ENCODE measurements at regions of chr10 and their contacts with region 1.

Region 1: GRCh38 chr10:6108603-6109443 is 20.0 kb downstream of the RBM17 start:
- DNase-seq: no peak
- H3K4me3 ChIP-seq: no peak overlapping the region
- H3K27ac ChIP-seq: no peak overlapping the region
- H3K4me1 ChIP-seq: peaks cover 0 to 3% (median 0%) of the 10 kb centered on the region in 4 donors
- H3K27me3 ChIP-seq: no peaks in the 10 kb centered on the region
- CTCF ChIP-seq: peak; percentile 77 to 82

Region 2: DNA sequence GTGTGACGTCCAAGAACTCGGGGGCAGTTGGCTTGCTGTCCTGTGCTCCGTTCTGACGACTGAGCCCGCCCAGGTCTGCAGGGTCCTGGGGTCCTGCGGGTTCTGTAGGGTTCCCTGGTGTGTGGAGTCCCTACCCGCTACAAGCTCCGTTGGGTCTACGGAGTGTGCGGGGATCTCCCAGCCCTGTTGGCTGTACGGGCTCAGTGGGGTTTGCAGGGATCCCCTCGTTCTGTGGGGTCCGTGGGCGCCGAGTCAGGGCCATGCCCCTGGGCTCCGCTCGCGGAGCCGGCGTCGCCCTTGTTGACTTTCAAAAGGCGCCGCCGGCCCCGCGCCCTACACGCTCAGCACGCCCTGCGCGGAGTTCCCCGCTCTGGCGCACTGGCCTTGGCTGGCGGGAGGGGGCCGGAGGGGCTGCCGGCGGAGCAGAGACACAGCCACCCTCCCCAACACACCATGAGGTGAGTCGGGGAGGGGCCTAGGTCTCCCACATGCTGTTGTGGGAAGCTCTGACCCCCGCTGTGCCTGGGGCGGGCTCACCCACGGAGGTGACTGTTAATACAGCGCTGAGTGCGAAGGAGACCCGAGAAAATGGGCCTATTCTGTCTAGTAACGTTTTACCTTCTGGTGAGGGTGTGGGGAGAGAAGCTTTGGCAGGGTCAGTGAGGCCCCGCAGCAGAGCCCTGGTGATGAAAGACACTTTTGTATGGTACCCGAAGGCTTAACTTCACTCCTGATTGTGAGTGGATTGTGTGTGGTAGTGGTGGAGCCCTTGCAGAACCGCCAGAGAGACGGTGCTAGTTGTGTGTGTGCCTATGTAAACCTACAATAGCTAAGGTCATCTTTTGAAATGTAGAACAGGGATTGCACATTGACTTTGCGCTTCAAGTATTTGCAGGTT is 416.1 kb before region 1 on chr10:
- intact Hi-C with region 1: no loop called
- DNase-seq: no peak
- H3K4me3 ChIP-seq: peak overlapping the region; percentile 47 to 56
- H3K27ac ChIP-seq: peak overlapping the region; percentile 34 to 41
- H3K4me1 ChIP-seq: peaks cover 0 to 39% (median 16%) of the 10 kb centered on the region in 4 donors
- H3K27me3 ChIP-seq: no peaks in the 10 kb centered on the region
- CTCF ChIP-seq: no peak

Region 3: DNA sequence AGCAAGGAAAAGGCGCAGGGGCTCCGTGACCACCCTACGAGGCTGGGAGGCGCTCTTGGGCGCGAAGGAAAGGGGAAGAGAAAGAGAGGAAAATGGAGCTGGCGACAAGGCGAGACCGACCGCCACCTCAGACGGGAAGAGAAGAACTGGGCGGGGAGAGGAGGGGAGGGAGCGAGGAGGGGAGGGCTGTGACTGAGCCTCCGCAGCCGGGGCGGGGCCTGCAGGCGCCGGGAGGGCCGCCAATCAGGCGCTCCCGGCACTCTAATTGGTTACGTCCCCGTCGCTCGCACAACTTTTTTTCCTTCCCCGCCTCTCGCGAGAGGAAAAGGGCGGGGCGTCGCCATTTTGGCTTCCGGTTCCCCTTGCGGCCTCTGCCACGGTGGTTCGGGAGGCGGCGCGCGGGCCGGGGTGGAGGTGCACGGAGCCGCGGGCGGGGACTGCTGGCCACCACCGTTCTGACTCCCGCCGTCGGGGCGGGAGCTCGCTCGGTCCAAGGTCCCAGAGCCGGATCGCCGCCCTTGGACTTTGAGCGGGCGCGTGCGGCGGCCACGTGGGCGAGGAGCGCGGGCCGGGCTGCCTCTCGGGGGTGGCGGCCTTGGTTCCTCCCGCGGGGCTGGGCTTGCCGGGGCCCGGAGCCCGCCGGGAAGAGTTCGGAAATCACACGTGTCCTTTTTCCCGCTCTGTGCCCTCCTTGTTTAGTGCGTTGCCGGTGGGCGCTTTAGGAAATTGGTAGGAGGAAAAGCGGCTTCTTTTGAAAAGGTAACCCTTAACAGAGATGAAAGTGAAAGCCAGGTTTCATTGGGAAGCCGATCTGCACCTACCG is 295.3 kb before region 1 on chr10 and contains the start of gene GDI2:
- intact Hi-C with region 1: no loop called
- DNase-seq: peak; percentile 94 to 97
- H3K4me3 ChIP-seq: peak within 1 kb of the TSS; percentile 91 to 100
- H3K27ac ChIP-seq: peak within 1 kb of the TSS; percentile 96 to 99
- H3K4me1 ChIP-seq: peaks cover 0 to 46% (median 14%) of the 10 kb centered on the region in 4 donors
- H3K27me3 ChIP-seq: no peaks in the 10 kb centered on the region
- CTCF ChIP-seq: peak in 1 of 2 experiments; percentile 24

Region 4: DNA sequence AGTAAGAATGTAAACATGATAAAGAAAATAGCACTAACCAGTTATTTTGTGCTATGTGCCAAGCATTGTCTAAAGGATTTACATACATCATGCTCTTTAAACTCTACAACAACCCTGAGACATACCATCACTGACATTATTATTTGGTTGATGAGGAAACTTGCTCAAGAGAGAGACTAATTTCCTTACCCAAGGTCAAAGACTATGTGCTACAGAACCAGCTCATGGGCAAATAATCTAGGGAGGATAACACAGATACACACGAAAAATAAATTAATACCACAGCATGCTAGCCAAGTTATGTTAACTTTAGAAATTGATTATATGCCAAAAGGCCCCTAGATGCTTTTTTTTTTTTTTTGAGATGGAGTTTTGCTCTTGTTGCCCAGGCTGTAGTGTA is 221.8 kb before region 1 on chr10:
- intact Hi-C with region 1: no loop called
- DNase-seq: no peak
- H3K4me3 ChIP-seq: no peak overlapping the region
- H3K27ac ChIP-seq: no peak overlapping the region
- H3K4me1 ChIP-seq: peaks cover 0 to 34% (median 27%) of the 10 kb centered on the region in 4 donors
- H3K27me3 ChIP-seq: no peaks in the 10 kb centered on the region
- CTCF ChIP-seq: no peak

Region 5: DNA sequence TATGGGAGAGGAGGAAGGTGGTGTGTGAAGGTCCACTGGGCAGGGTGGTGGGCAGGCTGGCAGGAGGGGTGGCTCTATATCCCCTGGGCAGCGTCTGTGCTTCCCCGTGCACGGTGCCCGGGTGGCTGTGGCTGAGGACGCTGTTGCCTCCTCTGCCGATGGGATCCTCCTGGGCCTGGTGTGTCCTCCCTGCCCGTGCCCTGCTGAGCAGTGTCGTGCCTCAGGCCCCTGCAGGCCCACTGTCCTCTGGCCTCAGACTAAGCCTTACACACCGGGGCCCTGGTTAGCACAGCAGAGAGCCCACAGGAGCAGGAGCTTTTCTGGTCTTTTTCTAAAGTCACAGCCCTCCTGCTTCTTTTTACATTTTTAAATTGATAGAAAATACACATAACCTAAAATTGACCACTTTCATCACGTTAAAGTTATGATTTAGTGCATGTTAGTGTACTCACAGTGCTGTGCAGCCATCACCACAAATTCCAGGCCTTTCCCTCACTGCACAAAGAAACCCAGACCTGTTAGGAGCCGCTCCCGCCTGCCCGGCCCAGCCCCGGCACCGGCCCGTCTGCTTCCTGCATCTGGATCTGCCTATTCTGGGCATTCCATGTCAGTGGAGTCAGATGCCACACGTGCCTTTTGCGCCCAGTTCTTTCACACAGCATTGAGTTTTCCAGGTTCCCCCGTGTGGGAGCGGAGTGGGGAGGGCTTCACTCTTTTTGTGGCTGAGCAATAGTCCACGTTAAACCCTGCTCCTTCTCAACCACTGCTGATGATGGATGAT is 113.3 kb after region 1 on chr10:
- intact Hi-C with region 1: no loop called
- DNase-seq: no peak
- H3K4me3 ChIP-seq: no peak overlapping the region
- H3K27ac ChIP-seq: peak overlapping the region in 1 of 2 donors; percentile 50
- H3K4me1 ChIP-seq: peaks cover 0 to 5% (median 0%) of the 10 kb centered on the region in 4 donors
- H3K27me3 ChIP-seq: no peaks in the 10 kb centered on the region
- CTCF ChIP-seq: no peak

Region 6: DNA sequence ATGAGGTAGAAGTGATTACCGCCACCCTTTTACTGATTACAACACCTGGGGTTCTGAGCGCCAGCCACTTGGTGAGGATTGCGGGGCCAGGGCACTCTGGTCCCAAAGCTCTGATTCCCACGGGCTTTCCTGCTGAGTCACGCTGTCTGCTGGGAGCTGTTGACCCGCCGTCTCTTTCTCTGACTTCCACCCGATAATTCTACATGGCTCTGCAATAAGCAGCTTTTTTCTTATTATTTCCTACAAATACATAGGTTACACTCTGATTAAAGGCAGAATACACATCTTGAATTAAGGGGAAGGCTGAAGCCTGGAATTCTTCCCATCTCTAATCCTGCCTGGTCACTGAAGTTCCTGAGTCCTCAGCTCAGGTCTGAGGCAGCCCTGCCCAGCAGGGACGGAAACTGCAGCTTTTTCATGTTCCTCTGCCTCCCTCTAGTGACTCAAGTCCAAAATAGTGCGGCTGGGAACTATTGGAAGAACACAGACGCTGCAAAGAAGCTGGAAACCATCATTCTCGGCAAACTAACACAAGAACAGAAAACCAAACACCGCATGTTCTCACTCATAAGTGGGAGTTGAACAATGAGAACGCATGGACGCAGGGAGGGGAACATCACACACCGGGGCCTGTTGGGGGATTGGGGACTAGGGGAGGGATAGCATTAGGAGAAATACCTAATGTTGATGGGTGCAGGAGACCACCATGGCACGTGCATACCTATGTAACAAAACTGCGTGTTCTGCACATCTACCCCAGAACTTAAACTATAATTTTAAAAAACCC is 292.9 kb after region 1 on chr10:
- intact Hi-C with region 1: loop called (anchors 2 kb)
- DNase-seq: peak; percentile 75 to 86
- H3K4me3 ChIP-seq: peak overlapping the region; percentile 40 to 45
- H3K27ac ChIP-seq: peak overlapping the region; percentile 53 to 63
- H3K4me1 ChIP-seq: peaks cover 0 to 27% (median 15%) of the 10 kb centered on the region in 4 donors
- H3K27me3 ChIP-seq: no peaks in the 10 kb centered on the region
- CTCF ChIP-seq: peak; percentile 71 to 87

Measured in tibial artery (tissue), 4 donors.